ENCODE measurements at regions of chr13 and their contacts with region 1.

Region 1: DNA sequence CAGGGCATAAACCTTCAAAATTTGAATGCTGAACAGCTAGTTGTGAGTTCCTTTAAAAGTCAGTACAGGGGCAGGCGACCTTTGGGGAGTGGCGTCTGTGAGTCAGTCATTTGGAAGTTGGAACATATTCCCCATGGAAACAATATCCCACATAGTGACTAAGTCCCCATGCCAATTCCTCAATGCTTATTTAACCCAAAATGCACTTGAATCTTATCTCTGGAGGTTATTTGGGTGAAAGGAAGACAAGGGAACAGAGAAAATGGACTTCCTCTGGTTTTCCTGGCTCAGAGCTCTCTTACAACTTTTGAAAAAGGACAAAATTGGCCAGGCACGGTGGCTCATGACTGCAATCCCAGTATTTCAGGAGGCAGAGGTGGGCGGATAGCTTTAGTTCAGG is 479.2 kb upstream of the NBEA start:
- DNase-seq: peak; percentile 65 to 90
- H3K4me3 ChIP-seq: 0 out of 2 replicates have a peak overlapping the region, but pooled peaks have one; percentile 7
- H3K27ac ChIP-seq: peak overlapping the region; percentile 78
- H3K4me1 ChIP-seq: peaks cover 29% of the 10 kb centered on the region
- H3K27me3 ChIP-seq: no peaks in the 10 kb centered on the region
- CTCF ChIP-seq: no peak

Region 2: GRCh38 chr13:34412817-34413375 is 49.9 kb before region 1 on chr13:
- CTCF ChIA-PET with region 1: no interaction called
- POLR2A ChIA-PET with region 1: no interaction called
- intact Hi-C with region 1: loop called (anchors 5 kb)
- DNase-seq: peak; percentile 46 to 75
- H3K4me3 ChIP-seq: no peak overlapping the region
- H3K27ac ChIP-seq: no peak overlapping the region
- H3K4me1 ChIP-seq: peaks cover 16% of the 10 kb centered on the region
- H3K27me3 ChIP-seq: no peaks in the 10 kb centered on the region
- CTCF ChIP-seq: no peak

Measured in PC-9 (cell line).